Activated T-helper 2 cell treated with anti-CD3 and anti-CD28 coated beads, Interferon-gamma antibody, Interleukin-2, Interleukin-4, amounts not matched to agents 10 μg/mL and 5 μg/mL and 100 μg/mL, durations not matched to agents 14 hours and 24 hours and 36 hours (primary cell): ENCODE measurements at regions of chr11 and their contacts with region 1.

Region 1: GRCh38 chr11:2901854-2902783 is 16.5 kb upstream of the CDKN1C start:
- DNase-seq: peak; percentile 94
- H3K4me3 Mint-ChIP-seq: peak overlapping the region; percentile 74
- H3K27ac Mint-ChIP-seq: peak overlapping the region; percentile 61
- H3K4me1 Mint-ChIP-seq: peaks cover 37% of the 10 kb centered on the region
- H3K27me3 Mint-ChIP-seq: no peaks in the 10 kb centered on the region

Region 2: GRCh38 chr11:2666401-2666741 is 235.7 kb before region 1 on chr11:
- intact Hi-C with region 1: no loop called
- DNase-seq: no peak
- H3K4me3 Mint-ChIP-seq: no peak overlapping the region
- H3K27ac Mint-ChIP-seq: no peak overlapping the region
- H3K4me1 Mint-ChIP-seq: no peaks in the 10 kb centered on the region
- H3K27me3 Mint-ChIP-seq: no peaks in the 10 kb centered on the region

Region 3: GRCh38 chr11:2912498-2912897 is 10.4 kb after region 1 on chr11:
- intact Hi-C with region 1: no loop called
- DNase-seq: no peak
- H3K4me3 Mint-ChIP-seq: no peak overlapping the region
- H3K27ac Mint-ChIP-seq: no peak overlapping the region
- H3K4me1 Mint-ChIP-seq: no peaks in the 10 kb centered on the region
- H3K27me3 Mint-ChIP-seq: no peaks in the 10 kb centered on the region

Region 4: GRCh38 chr11:2930704-2931428 is 28.7 kb after region 1 on chr11:
- intact Hi-C with region 1: loop called (anchors 1 kb)
- DNase-seq: no peak
- H3K4me3 Mint-ChIP-seq: peak overlapping the region; percentile 82
- H3K27ac Mint-ChIP-seq: peak overlapping the region; percentile 92
- H3K4me1 Mint-ChIP-seq: peaks cover 24% of the 10 kb centered on the region
- H3K27me3 Mint-ChIP-seq: peaks cover 15% of the 10 kb centered on the region